ENCODE measurements at regions of chr2 and their contacts with region 1.

Region 1: GRCh38 chr2:127526149-127527000 is at the start of gene IWS1:
- DNase-seq: peak; percentile 94
- H3K4me3 ChIP-seq: peak within 1 kb of the TSS; percentile 64 to 95 (median 67)
- H3K27ac ChIP-seq: peak within 1 kb of the TSS; percentile 98
- H3K4me1 ChIP-seq: peaks cover 16% of the 10 kb centered on the region
- H3K27me3 ChIP-seq: no peaks in the 10 kb centered on the region
- CTCF ChIP-seq: peak in 1 of 2 donors; percentile 23
- total RNA-seq, gene IWS1: 24.7 to 52.5 TPM

Region 2: DNA sequence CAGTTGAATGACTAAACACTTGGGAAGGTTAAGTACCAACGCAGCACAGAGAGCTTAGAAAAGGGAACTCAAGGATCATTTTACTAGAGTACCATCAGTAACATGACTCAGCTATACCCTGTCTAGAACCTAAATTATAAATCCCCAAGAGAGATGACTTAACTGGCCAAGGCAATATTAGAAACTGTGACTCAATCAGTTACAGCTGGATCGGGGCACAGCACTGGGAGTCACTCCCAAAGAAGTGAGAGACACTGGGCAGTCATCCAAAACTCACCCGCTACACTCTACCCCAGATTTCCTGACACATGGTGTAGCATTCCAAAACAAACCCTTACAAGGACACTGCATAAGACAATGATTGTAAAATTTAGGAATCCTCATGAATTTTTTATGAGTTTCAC is 17.7 kb before region 1 on chr2:
- CTCF ChIA-PET with region 1: no interaction called
- dilution Hi-C with region 1: no loop called
- in situ Hi-C with region 1: no loop called
- intact Hi-C with region 1: loop called (anchors 1 kb)
- DNase-seq: peak; percentile 99
- H3K4me3 ChIP-seq: no peak overlapping the region
- H3K27ac ChIP-seq: peak overlapping the region; percentile 68
- H3K4me1 ChIP-seq: peaks cover 16% of the 10 kb centered on the region
- H3K27me3 ChIP-seq: no peaks in the 10 kb centered on the region
- CTCF ChIP-seq: no peak

Region 3: DNA sequence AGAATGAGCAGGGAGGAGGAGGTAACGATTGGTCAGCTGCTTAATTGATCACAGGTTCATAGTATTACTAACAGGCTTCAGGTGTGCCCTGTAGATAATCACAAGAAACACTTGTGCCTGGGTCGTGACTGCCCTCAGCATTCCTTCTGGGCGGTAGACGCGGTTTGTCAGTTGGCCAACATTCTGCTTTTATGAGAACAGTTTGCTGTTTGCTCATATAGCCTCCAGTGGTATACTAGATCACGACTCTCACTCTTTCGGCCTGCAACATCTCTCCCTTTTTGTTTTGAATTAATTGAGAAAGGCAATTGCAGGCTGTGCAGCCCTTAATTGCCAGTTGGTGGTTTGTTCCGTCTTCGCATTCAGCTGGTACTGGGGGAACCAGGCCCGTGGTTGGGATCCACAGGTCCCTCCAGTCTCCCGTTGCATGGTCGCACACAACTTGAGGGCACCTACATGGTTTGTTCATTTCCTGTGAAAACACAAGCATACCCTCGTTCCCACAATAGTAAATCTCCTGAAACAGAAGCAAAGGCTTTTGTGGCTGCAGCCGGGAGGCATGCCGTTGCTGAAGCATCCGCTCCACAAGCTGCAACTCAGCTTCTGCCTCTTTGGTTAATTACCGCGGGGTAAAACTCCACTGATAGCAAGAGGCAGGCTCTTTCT is 89.3 kb after region 1 on chr2:
- CTCF ChIA-PET with region 1: no interaction called
- dilution Hi-C with region 1: no loop called
- in situ Hi-C with region 1: no loop called
- intact Hi-C with region 1: no loop called
- DNase-seq: peak; percentile 32
- H3K4me3 ChIP-seq: no peak overlapping the region
- H3K27ac ChIP-seq: no peak overlapping the region
- H3K4me1 ChIP-seq: peaks cover 2% of the 10 kb centered on the region
- H3K27me3 ChIP-seq: no peaks in the 10 kb centered on the region
- CTCF ChIP-seq: no peak

Region 4: GRCh38 chr2:127701193-127701650 is 174.8 kb after region 1 on chr2 and contains the start of gene SFT2D3:
- CTCF ChIA-PET with region 1: interaction called, 5 read pairs
- dilution Hi-C with region 1: no loop called
- in situ Hi-C with region 1: no loop called
- intact Hi-C with region 1: loop called (anchors 5 kb)
- DNase-seq: peak; percentile 81
- H3K4me3 ChIP-seq: peak within 1 kb of the TSS; percentile 72 to 87 (median 80)
- H3K27ac ChIP-seq: peak within 1 kb of the TSS; percentile 72
- H3K4me1 ChIP-seq: peaks cover 20% of the 10 kb centered on the region
- H3K27me3 ChIP-seq: no peaks in the 10 kb centered on the region
- CTCF ChIP-seq: no peak
- total RNA-seq, gene SFT2D3: 3.2 to 9.2 TPM